Posterior vena cava (tissue), 2 donors: ENCODE measurements at regions of chr18 and their contacts with region 1.

Region 1: GRCh38 chr18:31830686-31831085 is 70.0 kb upstream of the SLC25A52 start:
- DNase-seq: no peak

Region 2: GRCh38 chr18:31920277-31920676 is 89.6 kb after region 1 on chr18:
- intact Hi-C with region 1: no loop called
- DNase-seq: no peak

Region 3: DNA sequence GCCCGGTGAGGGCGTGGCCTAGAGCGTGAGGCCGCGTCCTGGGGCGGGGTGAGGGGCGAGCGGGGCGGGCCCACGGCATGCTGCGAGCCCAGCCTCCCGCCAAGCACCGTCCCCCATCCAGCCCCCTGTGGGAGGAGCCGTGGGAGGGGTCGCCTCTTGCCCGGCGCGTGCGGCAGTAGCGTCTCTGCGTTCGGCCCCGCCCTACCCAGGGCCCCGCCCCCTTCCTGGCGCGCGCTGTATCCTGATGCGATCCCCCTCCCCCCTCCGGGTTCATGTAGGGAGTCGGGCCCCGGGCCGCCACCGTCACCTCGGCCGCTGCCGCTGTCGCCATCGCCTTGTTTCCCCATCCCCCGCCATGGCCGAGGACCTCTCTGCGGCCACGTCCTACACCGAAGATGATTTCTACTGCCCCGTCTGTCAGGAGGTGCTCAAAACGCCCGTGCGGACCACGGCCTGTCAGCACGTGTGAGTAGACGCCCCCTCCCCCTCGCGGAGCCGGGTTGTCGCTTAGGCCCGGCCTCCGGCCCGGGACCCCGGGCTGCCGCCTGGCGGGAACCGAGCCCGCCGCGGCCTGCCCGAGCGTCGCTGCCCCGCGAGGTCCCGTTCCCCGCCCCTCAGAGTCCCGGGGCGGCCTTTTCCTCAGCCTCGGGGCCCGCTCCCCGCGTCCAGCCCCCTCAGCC is 261.9 kb after region 1 on chr18:
- intact Hi-C with region 1: loop called in 1 of 2 experiments (anchors 5 kb)
- DNase-seq: peak; percentile 100